T-cell (primary cell): ENCODE measurements at regions of chrX and their contacts with region 1.

Region 1: DNA sequence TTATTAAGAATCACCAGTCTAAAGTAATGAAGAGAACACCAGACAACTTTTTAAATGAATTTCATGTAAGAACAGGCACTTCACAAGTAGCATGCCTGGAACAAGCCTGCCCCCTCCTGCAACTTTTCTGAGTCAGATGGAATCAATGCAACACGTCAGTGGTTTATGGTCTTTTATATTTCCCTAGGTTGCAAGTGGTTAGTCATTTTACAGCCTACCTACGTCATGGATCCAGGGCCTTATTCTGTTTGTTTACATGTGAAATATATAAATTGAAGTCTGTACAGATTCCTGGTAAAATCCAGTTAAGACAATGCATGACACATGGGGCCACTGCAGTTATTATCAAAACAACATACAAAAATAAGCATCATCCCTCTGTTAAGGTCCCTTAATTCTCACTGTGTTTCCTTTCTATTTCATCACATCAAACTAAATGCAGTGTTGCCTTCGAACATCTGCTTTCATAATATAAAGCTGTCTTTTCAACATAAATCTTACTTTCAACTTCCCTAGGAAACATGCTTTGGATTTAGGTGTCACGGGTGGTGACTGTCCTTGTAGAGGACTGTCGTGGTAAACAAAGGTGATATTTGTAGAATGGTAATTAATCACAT is 309.3 kb downstream of the FRMPD4 start:
- DNase-seq: no peak
- ATAC-seq: no peak
- H3K4me3 ChIP-seq: no peak overlapping the region
- H3K4me3 Mint-ChIP-seq: no peak overlapping the region
- H3K27ac ChIP-seq: no peak overlapping the region
- H3K27ac Mint-ChIP-seq: no peak overlapping the region
- H3K4me1 ChIP-seq: no peaks in the 10 kb centered on the region
- H3K4me1 Mint-ChIP-seq: no peaks in the 10 kb centered on the region
- H3K27me3 ChIP-seq: no peaks in the 10 kb centered on the region
- H3K27me3 Mint-ChIP-seq: peaks cover 0 to 13% of the 10 kb centered on the region in 2 donors

Region 2: GRCh38 chrX:12282991-12283390 is 164.6 kb before region 1 on chrX:
- CTCF ChIA-PET with region 1: no interaction called
- POLR2A ChIA-PET with region 1: no interaction called
- DNase-seq: no peak
- ATAC-seq: no peak
- H3K4me3 ChIP-seq: no peak overlapping the region
- H3K4me3 Mint-ChIP-seq: no peak overlapping the region
- H3K27ac ChIP-seq: no peak overlapping the region
- H3K27ac Mint-ChIP-seq: no peak overlapping the region
- H3K4me1 ChIP-seq: no peaks in the 10 kb centered on the region
- H3K4me1 Mint-ChIP-seq: no peaks in the 10 kb centered on the region
- H3K27me3 ChIP-seq: no peaks in the 10 kb centered on the region
- H3K27me3 Mint-ChIP-seq: peaks cover 0 to 3% of the 10 kb centered on the region in 2 donors

Region 3: DNA sequence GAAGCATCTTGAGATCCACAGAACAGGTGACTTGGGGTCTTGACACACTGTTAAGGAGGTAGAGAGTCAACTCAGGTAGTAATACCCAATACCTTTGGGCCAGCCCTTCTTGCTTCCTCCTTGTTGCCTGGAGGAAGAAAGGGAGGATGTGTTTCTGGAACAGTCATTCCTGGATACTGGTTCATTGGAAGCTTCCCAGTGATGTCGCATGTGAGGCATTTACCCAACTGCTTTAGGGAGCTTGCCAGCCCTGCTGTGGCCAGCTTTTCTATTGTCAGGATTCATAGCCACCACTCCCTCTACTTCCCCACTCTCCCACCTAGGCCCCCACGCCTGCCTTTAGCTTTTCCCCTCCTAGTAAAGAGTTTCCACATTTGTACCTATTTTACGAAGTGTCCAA is 33.4 kb after region 1 on chrX:
- CTCF ChIA-PET with region 1: no interaction called
- POLR2A ChIA-PET with region 1: no interaction called
- DNase-seq: no peak
- ATAC-seq: no peak
- H3K4me3 ChIP-seq: no peak overlapping the region
- H3K4me3 Mint-ChIP-seq: no peak overlapping the region
- H3K27ac ChIP-seq: no peak overlapping the region
- H3K27ac Mint-ChIP-seq: no peak overlapping the region
- H3K4me1 ChIP-seq: no peaks in the 10 kb centered on the region
- H3K4me1 Mint-ChIP-seq: no peaks in the 10 kb centered on the region
- H3K27me3 ChIP-seq: no peaks in the 10 kb centered on the region
- H3K27me3 Mint-ChIP-seq: peaks cover 0 to 3% of the 10 kb centered on the region in 2 donors

Region 4: DNA sequence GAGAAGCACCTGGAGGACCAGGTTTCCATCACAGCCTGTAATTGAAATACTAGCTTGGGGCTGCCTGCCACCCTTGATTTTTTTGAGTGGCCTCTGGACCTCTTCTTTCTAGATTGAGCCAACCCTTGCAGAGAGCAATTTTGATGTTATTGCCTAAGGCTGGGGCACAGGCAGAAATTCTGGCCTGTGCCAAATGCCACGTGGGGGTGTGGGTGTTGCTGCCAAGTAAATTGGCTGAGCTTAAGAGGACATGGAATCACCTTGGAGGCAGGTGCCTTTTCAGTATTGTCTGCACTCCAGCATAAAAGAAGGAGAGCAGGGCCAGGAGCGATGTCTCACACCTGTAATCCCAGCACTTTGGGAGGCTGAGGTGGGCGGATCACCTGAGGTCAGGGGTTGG is 57.6 kb after region 1 on chrX:
- CTCF ChIA-PET with region 1: interaction called in 1 of 2 experiments, 10 read pairs
- POLR2A ChIA-PET with region 1: no interaction called
- DNase-seq: no peak
- ATAC-seq: no peak
- H3K4me3 ChIP-seq: no peak overlapping the region
- H3K4me3 Mint-ChIP-seq: no peak overlapping the region
- H3K27ac ChIP-seq: no peak overlapping the region
- H3K27ac Mint-ChIP-seq: no peak overlapping the region
- H3K4me1 ChIP-seq: no peaks in the 10 kb centered on the region
- H3K4me1 Mint-ChIP-seq: no peaks in the 10 kb centered on the region
- H3K27me3 ChIP-seq: no peaks in the 10 kb centered on the region
- H3K27me3 Mint-ChIP-seq: peaks cover 0 to 4% of the 10 kb centered on the region in 2 donors